Activated CD4-positive, alpha-beta memory T cell treated with anti-CD3 and anti-CD28 coated beads, Interleukin-2, amount 10 ng/mL, durations not matched to agents 7 days and 5 days (primary cell): ENCODE measurements at regions of chr6 and their contacts with region 1.

Region 1: DNA sequence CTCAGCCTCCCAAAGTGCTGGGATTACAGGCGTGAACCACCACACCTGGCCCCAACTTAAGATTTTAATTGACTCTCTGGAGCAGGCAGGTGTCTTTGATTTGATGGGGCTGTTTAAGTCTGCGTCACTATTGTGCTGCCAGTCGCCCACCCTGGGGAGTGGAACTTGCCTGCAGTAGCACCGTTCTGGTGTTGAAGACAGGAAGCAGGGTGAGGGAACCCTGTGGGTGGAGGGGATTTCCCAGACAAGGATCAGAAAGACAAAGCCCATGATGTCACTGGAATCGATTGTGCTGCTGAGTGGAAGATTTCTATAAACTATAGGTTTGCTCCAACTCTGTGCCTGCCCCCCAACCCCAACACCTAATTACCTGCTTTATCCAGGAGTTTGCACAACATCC is 11.0 kb downstream of the ALDH8A1 start:
- DNase-seq: peak; percentile 52
- H3K4me3 Mint-ChIP-seq: no peak overlapping the region
- H3K27ac Mint-ChIP-seq: no peak overlapping the region
- H3K4me1 Mint-ChIP-seq: peaks cover 12% of the 10 kb centered on the region
- H3K27me3 Mint-ChIP-seq: no peaks in the 10 kb centered on the region

Region 2: GRCh38 chr6:134123666-134124208 is 815.2 kb before region 1 on chr6:
- CTCF ChIA-PET with region 1: interaction called, 32 read pairs
- POLR2A ChIA-PET with region 1: no interaction called
- DNase-seq: no peak
- H3K4me3 Mint-ChIP-seq: no peak overlapping the region
- H3K27ac Mint-ChIP-seq: no peak overlapping the region
- H3K4me1 Mint-ChIP-seq: no peaks in the 10 kb centered on the region
- H3K27me3 Mint-ChIP-seq: peaks cover 6% of the 10 kb centered on the region

Region 3: GRCh38 chr6:134161036-134161435 is 777.9 kb before region 1 on chr6:
- CTCF ChIA-PET with region 1: interaction called, 25 read pairs
- POLR2A ChIA-PET with region 1: no interaction called
- DNase-seq: no peak
- H3K4me3 Mint-ChIP-seq: no peak overlapping the region
- H3K27ac Mint-ChIP-seq: no peak overlapping the region
- H3K4me1 Mint-ChIP-seq: no peaks in the 10 kb centered on the region
- H3K27me3 Mint-ChIP-seq: no peaks in the 10 kb centered on the region

Region 4: GRCh38 chr6:134822920-134823709 is 115.8 kb before region 1 on chr6:
- CTCF ChIA-PET with region 1: interaction called, 17 read pairs
- POLR2A ChIA-PET with region 1: no interaction called
- DNase-seq: peak; percentile 31
- H3K4me3 Mint-ChIP-seq: no peak overlapping the region
- H3K27ac Mint-ChIP-seq: no peak overlapping the region
- H3K4me1 Mint-ChIP-seq: peaks cover 3% of the 10 kb centered on the region
- H3K27me3 Mint-ChIP-seq: peaks cover 5% of the 10 kb centered on the region

Region 5: DNA sequence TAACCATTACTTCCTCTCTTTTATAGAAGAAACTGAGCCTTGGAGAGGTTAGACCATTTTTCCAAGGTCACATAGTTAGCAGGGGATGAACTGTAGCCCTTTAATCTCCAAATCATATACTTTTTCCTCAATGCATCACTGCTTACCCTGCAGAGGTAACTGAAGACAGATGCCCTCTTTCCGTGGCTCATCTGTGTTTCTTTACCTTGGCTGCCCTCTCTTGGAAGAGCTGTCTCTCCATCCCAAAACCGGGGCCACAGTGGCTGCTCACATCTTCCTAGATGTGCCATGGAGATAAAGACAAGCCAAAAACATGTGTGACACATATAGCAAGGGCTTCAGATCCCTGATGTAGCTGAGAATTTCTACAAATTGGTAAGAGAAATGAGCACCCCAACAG is 11.6 kb after region 1 on chr6:
- CTCF ChIA-PET with region 1: interaction called, 23 read pairs
- POLR2A ChIA-PET with region 1: no interaction called
- DNase-seq: no peak
- H3K4me3 Mint-ChIP-seq: no peak overlapping the region
- H3K27ac Mint-ChIP-seq: no peak overlapping the region
- H3K4me1 Mint-ChIP-seq: no peaks in the 10 kb centered on the region
- H3K27me3 Mint-ChIP-seq: no peaks in the 10 kb centered on the region